BJ (cell line): ENCODE measurements at regions of chr14 and their contacts with region 1.

Region 1: DNA sequence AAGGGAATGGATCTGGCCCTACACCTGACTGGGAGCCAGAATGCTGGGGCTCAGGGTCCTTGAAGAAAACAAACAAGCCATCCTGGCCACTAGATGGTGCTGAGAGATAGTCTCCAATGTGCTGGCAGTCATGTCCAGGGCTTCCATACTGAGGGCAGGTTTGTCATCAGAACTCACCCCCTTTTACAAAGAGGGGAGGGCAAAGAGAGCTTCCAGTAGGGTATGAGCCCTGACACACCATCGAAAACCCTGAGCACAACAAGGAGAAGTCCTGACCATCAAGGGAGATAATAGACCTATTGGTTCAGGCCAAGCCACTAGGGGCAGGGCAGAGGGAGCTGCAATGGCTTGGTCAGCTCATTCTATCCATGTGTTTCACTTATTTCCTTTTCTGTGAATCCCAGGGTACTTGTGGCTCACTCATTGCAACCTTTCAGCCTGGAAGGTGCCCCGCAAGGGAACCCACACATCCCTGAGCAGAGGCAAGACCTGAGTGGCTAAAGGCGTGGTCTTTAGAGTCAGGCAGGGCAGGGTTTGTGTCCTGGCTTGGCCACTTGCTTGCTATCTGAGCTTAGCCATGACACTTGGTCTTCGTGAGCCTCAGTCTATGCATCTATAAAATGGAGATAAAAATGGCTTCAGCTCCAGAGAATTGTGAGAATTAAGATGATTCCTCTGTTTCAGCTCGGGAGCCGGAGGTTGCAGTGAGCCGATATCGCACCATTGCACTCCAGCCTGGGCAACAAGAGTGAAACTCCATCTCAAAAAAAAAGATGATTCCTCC is 6.2 kb upstream of the PLEKHH1 start:
- DNase-seq: no peak
- H3K4me3 ChIP-seq: no peak overlapping the region
- H3K27me3 ChIP-seq: peaks cover 16% of the 10 kb centered on the region
- CTCF ChIP-seq: peak; percentile 77

Region 2: GRCh38 chr14:66771234-66771633 is 755.6 kb before region 1 on chr14:
- CTCF ChIA-PET with region 1: no interaction called
- POLR2A ChIA-PET with region 1: no interaction called
- DNase-seq: no peak
- H3K4me3 ChIP-seq: no peak overlapping the region
- H3K27me3 ChIP-seq: no peaks in the 10 kb centered on the region
- CTCF ChIP-seq: no peak

Region 3: GRCh38 chr14:67505254-67505653 is 21.6 kb before region 1 on chr14:
- CTCF ChIA-PET with region 1: interaction called, 14 read pairs
- POLR2A ChIA-PET with region 1: no interaction called
- DNase-seq: no peak
- H3K4me3 ChIP-seq: no peak overlapping the region
- H3K27me3 ChIP-seq: 0 out of 2 replicates have a peak, but pooled peaks cover 1% of the 10 kb centered on the region
- CTCF ChIP-seq: no peak

Region 4: GRCh38 chr14:67514650-67515385 is 12.1 kb before region 1 on chr14:
- CTCF ChIA-PET with region 1: interaction called, 53 read pairs
- POLR2A ChIA-PET with region 1: no interaction called
- DNase-seq: no peak
- H3K4me3 ChIP-seq: peak overlapping the region; percentile 59
- H3K27me3 ChIP-seq: peaks cover 28% of the 10 kb centered on the region
- CTCF ChIP-seq: no peak

Region 5: GRCh38 chr14:67541448-67542387 is 14.8 kb after region 1 on chr14:
- CTCF ChIA-PET with region 1: interaction called, 12 read pairs
- POLR2A ChIA-PET with region 1: no interaction called
- DNase-seq: no peak
- H3K4me3 ChIP-seq: no peak overlapping the region
- H3K27me3 ChIP-seq: peaks cover 16% of the 10 kb centered on the region
- CTCF ChIP-seq: no peak